ENCODE measurements at regions of chr2 and their contacts with region 1.

Region 1: DNA sequence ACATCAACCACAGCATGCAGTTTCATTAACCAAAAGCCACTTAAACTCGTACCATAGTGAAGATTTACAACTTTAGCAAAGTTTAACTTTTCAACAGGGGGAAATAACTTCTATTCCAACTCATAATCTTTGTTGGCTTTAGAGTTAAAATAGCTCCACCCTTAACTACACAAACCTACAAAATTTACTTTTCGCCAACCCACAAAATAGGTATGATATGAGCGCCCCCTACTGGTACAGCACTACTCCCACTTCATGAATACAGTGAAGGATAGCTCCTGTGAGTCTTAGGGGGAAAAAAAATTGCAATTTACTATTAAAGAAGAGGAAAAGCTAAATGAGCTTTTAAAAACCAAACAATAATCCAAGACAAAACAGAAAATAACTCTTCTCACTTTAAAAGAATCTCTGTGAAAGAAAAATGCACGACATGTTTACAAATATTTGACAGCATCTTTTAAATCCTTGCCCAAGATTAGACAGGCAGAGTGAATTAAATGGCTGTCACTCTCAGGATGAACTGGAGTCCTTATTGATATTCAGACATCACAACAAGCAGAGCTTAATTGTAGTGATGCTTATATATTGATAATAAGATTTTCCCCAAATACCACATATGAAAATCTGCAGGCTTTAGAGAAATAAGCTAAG is 32.2 kb downstream of the TMEFF2 start:
- DNase-seq: peak; percentile 60 to 86
- H3K4me3 ChIP-seq: no peak overlapping the region
- CTCF ChIP-seq: peak in 1 of 3 donors; percentile 84
- POLR2A ChIP-seq: no peak

Region 2: DNA sequence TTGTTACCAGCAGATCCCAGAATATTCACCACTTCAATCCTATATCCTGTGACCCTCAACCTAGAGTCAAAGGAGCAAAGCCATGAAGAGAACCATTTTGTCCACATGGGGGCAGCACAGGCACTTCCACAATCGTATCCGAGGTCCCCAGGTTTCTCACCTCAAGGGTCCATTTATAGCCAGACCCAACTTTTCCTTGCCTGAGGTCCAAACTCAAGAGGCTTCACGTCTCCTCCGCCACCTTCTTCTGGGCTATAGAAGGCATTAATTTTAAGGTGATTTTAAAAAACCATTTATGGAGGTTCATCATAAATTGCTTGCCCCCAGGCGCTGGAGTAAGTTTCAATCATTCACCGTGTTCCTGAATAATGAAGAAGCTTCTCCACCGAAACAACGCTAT is 596.2 kb before region 1 on chr2:
- intact Hi-C with region 1: loop called (anchors 5 kb)
- DNase-seq: peak in 1 of 2 donors; percentile 58
- H3K4me3 ChIP-seq: no peak overlapping the region
- CTCF ChIP-seq: peak in 1 of 3 donors; percentile 40
- POLR2A ChIP-seq: no peak

Region 3: DNA sequence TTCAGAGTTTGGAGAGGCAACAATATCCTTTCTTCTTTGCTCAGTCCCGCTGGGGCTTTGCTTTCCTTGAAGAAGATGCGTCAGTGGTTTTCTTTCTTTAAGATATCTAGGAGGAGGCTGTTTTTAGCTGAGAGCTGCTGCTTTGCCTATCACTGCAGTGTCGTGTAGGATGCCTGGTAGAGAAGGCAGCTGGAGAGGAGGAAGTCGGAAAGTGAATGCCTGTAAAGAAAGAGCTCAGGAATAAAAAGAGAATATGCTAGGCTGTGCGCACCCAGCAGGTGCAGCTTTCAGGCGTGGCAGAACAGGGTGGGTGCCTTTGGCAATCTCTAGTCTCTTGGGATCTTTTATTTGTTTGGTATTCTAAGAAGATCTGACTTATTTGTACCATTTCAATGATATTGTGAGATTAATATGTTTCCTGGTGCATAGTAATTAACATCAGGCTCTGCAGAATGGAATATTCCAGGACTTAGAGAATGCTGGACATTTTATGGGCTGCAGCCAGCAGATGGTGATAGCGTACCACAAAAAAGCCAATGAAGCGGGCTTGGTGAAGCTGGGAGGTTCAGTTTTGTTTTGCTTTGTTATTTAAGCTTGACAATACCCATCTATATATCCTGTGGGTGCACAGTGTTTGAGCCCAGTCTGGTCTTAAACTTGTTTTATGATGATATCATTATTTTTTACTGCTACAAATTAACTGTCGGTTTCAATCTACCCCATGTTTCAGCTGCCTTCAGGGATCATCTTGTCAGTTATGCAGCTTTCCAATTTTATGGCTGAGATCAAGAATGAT is 350.5 kb before region 1 on chr2:
- intact Hi-C with region 1: loop called (anchors 2 kb)
- DNase-seq: peak in 1 of 2 donors; percentile 44
- H3K4me3 ChIP-seq: no peak overlapping the region
- CTCF ChIP-seq: peak in 1 of 3 donors; percentile 62
- POLR2A ChIP-seq: no peak

Region 4: DNA sequence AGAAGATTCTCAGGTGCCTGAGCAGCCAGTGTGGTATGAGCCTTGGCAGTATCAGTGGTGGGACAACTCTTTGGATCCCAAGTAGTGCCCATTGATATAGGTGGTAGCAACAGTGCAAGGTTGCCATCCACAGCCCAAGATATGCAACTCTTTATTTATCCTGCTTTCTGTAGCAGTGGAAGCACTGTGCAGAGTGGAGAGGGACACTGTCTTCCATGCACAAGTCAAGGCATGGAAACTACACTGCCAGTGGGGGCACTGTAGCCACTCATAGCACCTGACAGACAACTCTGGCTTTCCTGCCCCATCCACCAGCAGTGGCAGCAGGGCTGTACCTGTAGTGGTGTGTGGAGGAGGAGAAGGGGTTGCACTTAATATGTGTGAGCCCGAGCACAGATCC is 441.8 kb after region 1 on chr2:
- intact Hi-C with region 1: no loop called
- DNase-seq: no peak
- H3K4me3 ChIP-seq: no peak overlapping the region
- CTCF ChIP-seq: no peak
- POLR2A ChIP-seq: no peak

Region 5: GRCh38 chr2:192749606-192750200 is 587.2 kb after region 1 on chr2:
- intact Hi-C with region 1: no loop called
- DNase-seq: no peak
- H3K4me3 ChIP-seq: no peak overlapping the region
- CTCF ChIP-seq: no peak
- POLR2A ChIP-seq: no peak